ENCODE measurements at regions of chr6 and their contacts with region 1.

Region 1: DNA sequence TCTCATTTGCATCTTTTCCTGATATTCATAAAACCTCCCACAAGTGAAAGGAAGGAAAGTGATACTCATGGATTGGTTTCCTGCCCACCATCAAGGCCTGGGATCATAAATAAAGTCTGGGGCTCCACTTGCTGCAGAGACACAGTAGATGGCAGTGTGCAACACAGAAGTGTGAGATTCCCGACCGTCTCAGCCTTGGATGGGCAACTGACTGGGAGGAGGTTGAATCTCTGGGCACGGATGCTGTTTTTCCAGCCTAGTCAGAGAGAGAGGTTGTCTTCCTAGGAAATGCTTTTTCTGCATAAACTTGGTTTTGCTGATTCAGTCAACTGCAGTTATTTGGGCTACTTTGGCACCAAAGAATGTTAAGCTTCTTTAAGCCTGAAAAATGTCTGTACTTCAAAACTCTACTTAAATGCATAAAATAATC is 9.9 kb upstream of the RFPL4B start:
- DNase-seq: peak; percentile 51 to 52
- H3K4me3 ChIP-seq: no peak overlapping the region
- H3K4me3 Mint-ChIP-seq: no peak overlapping the region
- H3K27ac Mint-ChIP-seq: no peak overlapping the region
- H3K4me1 ChIP-seq: no peaks in the 10 kb centered on the region
- H3K4me1 Mint-ChIP-seq: no peaks in the 10 kb centered on the region
- H3K27me3 ChIP-seq: no peaks in the 10 kb centered on the region
- H3K27me3 Mint-ChIP-seq: peaks cover 2% of the 10 kb centered on the region
- CTCF ChIP-seq: peak; percentile 69 to 80

Region 2: GRCh38 chr6:112372226-112372806 is 35.1 kb after region 1 on chr6:
- CTCF ChIA-PET with region 1: no interaction called
- POLR2A ChIA-PET with region 1: no interaction called
- intact Hi-C with region 1: loop called (anchors 5 kb)
- DNase-seq: no peak
- H3K4me3 ChIP-seq: no peak overlapping the region
- H3K4me3 Mint-ChIP-seq: no peak overlapping the region
- H3K27ac Mint-ChIP-seq: no peak overlapping the region
- H3K4me1 ChIP-seq: no peaks in the 10 kb centered on the region
- H3K4me1 Mint-ChIP-seq: no peaks in the 10 kb centered on the region
- H3K27me3 ChIP-seq: no peaks in the 10 kb centered on the region
- H3K27me3 Mint-ChIP-seq: peaks cover 20% of the 10 kb centered on the region
- CTCF ChIP-seq: peak in 1 of 2 experiments; percentile 32

Region 3: GRCh38 chr6:112443179-112444065 is 106.2 kb after region 1 on chr6:
- CTCF ChIA-PET with region 1: no interaction called
- POLR2A ChIA-PET with region 1: no interaction called
- intact Hi-C with region 1: loop called (anchors 1 kb)
- DNase-seq: no peak
- H3K4me3 ChIP-seq: no peak overlapping the region
- H3K4me3 Mint-ChIP-seq: no peak overlapping the region
- H3K27ac Mint-ChIP-seq: no peak overlapping the region
- H3K4me1 ChIP-seq: peaks cover 22% of the 10 kb centered on the region
- H3K4me1 Mint-ChIP-seq: peaks cover 7% of the 10 kb centered on the region
- H3K27me3 ChIP-seq: no peaks in the 10 kb centered on the region
- H3K27me3 Mint-ChIP-seq: no peaks in the 10 kb centered on the region
- CTCF ChIP-seq: no peak

Region 4: GRCh38 chr6:112618849-112619248 is 281.6 kb after region 1 on chr6:
- CTCF ChIA-PET with region 1: no interaction called
- POLR2A ChIA-PET with region 1: no interaction called
- intact Hi-C with region 1: loop called (anchors 1 kb)
- DNase-seq: peak in 1 of 2 experiments; percentile 37
- H3K4me3 ChIP-seq: no peak overlapping the region
- H3K4me3 Mint-ChIP-seq: no peak overlapping the region
- H3K27ac Mint-ChIP-seq: no peak overlapping the region
- H3K4me1 ChIP-seq: no peaks in the 10 kb centered on the region
- H3K4me1 Mint-ChIP-seq: no peaks in the 10 kb centered on the region
- H3K27me3 ChIP-seq: no peaks in the 10 kb centered on the region
- H3K27me3 Mint-ChIP-seq: no peaks in the 10 kb centered on the region
- CTCF ChIP-seq: peak in 1 of 2 experiments; percentile 44

Measured in Caco-2 (cell line).